CD14-positive monocyte (primary cell): ENCODE measurements at regions of chr7 and their contacts with region 1.

Region 1: DNA sequence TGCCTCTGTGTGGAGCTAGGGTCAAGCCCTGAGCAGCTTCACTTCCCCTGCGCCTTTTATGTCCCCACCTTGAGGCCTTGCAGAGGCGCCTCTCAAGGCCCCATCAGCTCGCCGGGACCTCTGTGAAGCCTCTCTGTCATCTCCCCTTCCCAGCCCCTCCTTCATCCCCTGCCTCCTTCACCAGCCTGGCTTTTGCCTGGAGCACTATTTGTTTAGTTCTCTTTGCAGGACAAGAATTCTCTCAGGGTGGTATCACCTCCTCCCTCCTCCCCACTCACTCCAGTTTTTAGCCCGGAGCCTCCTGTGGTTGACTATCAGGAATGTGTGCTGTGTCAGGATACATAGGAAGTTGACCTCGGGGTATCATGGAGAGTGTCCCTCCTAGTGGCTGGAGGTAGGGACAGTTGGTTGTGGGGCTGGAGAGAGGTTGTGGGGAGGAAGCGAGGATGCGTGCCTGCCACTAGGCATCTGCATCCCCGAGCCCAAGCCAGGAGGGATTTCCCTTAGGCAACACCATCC is 89.8 kb upstream of the ANLN start:
- DNase-seq: no peak
- H3K4me3 ChIP-seq: no peak overlapping the region
- H3K4me3 Mint-ChIP-seq: no peak overlapping the region
- H3K27ac ChIP-seq: no peak overlapping the region
- H3K27ac Mint-ChIP-seq: no peak overlapping the region
- H3K4me1 ChIP-seq: no peaks in the 10 kb centered on the region
- H3K4me1 Mint-ChIP-seq: peaks cover 4% of the 10 kb centered on the region
- H3K27me3 ChIP-seq: no peaks in the 10 kb centered on the region
- H3K27me3 Mint-ChIP-seq: peaks cover 0 to 4% (median 1%) of the 10 kb centered on the region in 3 donors
- CTCF ChIP-seq: no peak

Region 2: GRCh38 chr7:36182854-36183604 is 116.9 kb before region 1 on chr7:
- intact Hi-C with region 1: no loop called
- DNase-seq: no peak
- H3K4me3 ChIP-seq: no peak overlapping the region
- H3K4me3 Mint-ChIP-seq: peak overlapping the region in 1 of 2 donors; percentile 2
- H3K27ac ChIP-seq: no peak overlapping the region
- H3K27ac Mint-ChIP-seq: no peak overlapping the region
- H3K4me1 ChIP-seq: peaks cover 27 to 42% of the 10 kb centered on the region in 2 donors
- H3K4me1 Mint-ChIP-seq: peaks cover 62% of the 10 kb centered on the region
- H3K27me3 ChIP-seq: no peaks in the 10 kb centered on the region
- H3K27me3 Mint-ChIP-seq: peaks cover 0 to 3% (median 0%) of the 10 kb centered on the region in 3 donors
- CTCF ChIP-seq: no peak

Region 3: GRCh38 chr7:36250317-36250716 is 49.6 kb before region 1 on chr7:
- intact Hi-C with region 1: loop called in 1 of 2 experiments (anchors 5 kb)
- DNase-seq: no peak
- H3K4me3 ChIP-seq: no peak overlapping the region
- H3K4me3 Mint-ChIP-seq: no peak overlapping the region
- H3K27ac ChIP-seq: no peak overlapping the region
- H3K27ac Mint-ChIP-seq: no peak overlapping the region
- H3K4me1 ChIP-seq: no peaks in the 10 kb centered on the region
- H3K4me1 Mint-ChIP-seq: peaks cover 2% of the 10 kb centered on the region
- H3K27me3 ChIP-seq: no peaks in the 10 kb centered on the region
- H3K27me3 Mint-ChIP-seq: no peaks in the 10 kb centered on the region
- CTCF ChIP-seq: no peak

Region 4: GRCh38 chr7:36348256-36348655 is 48.4 kb after region 1 on chr7:
- intact Hi-C with region 1: no loop called
- DNase-seq: no peak
- H3K4me3 ChIP-seq: no peak overlapping the region
- H3K4me3 Mint-ChIP-seq: no peak overlapping the region
- H3K27ac ChIP-seq: no peak overlapping the region
- H3K27ac Mint-ChIP-seq: no peak overlapping the region
- H3K4me1 ChIP-seq: peaks cover 0 to 2% of the 10 kb centered on the region in 2 donors
- H3K4me1 Mint-ChIP-seq: peaks cover 9% of the 10 kb centered on the region
- H3K27me3 ChIP-seq: no peaks in the 10 kb centered on the region
- H3K27me3 Mint-ChIP-seq: no peaks in the 10 kb centered on the region
- CTCF ChIP-seq: no peak